H1 (cell line): ENCODE measurements at regions of chr9 and their contacts with region 1.

Region 1: DNA sequence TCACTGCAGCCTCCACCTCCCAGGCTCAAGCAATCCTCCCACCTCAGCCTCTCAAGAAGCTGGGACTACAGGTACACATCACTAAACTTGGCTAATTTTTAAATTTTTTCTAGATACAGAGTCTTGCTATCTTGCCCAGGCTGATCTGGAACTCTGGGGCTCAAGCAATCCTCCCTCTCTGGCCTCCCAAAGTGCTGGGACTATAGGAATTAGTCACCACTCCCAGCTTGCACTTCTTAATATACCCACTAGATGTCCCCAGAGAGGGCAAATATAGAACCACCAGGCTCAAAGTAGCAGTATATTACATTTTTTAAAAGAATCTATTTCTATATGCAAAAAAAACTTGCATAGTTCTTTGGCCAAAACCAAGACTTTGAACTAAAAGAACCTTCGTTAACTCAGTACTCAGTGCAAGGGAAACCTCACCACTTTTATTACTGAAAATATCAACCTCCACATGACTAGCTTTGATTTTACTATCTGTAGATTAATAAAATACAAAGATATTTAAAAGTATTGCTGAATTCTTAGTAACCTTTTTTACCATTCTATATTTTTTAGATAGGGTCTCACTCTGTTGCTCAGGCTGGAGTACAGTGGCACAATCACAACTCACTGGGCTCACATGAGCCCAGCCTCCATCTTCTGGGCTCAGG is 25.8 kb upstream of the HSD17B3 start:
- DNase-seq: no peak
- H3K4me3 ChIP-seq: no peak overlapping the region
- H3K27ac ChIP-seq: no peak overlapping the region
- H3K4me1 ChIP-seq: peaks cover 0 to 5% (median under 1%) of the 10 kb centered on the region in 4 experiments; a peak in 2 of 7 replicates
- H3K27me3 ChIP-seq: no peaks in the 10 kb centered on the region
- CTCF ChIP-seq: peak in 2 of 3 experiments; percentile 57 to 67; a peak in 3 of 4 replicates
- EP300 ChIP-seq: no peak
- POLR2A ChIP-seq: no peak
- RAD21 ChIP-seq: peak; percentile 63 to 74

Region 2: DNA sequence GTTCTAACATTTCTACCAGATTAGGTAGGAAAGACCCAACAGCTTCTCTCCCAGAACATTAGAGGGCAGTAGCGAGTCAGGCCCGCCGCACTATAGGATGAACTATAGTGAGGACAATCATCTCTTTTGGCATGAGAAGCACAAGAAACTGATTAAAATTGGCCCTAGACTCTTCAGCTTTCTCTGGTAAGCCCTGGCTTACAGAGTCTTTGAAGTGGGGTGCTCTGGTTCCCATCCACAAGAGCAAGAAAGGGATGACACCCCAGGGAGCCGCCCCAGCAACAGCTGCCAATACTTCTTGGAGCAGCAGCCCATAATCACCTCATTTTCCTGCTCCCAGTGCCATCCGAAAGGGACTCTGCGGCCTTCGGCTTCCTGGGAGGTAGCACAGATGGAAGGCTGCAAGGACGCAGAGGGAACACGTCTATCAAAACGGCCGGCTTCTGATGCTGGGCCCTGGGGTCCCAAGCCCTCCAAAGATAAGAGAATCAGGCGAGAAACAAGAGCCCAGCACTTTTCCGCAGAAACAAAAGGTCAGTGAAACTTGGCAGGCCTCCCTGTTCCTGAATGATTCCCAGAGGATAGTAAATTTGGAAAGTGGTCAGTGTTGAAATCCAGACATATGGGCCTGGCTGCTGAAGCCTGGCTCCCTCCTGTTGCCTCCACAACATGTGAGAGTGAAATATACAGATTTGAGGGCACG is 95.1 kb before region 1 on chr9:
- CTCF ChIA-PET with region 1: interaction called, 15 read pairs
- POLR2A ChIA-PET with region 1: no interaction called
- DNase-seq: no peak
- H3K4me3 ChIP-seq: no peak overlapping the region
- H3K27ac ChIP-seq: no peak overlapping the region
- H3K4me1 ChIP-seq: no peaks in the 10 kb centered on the region
- H3K27me3 ChIP-seq: no peaks in the 10 kb centered on the region
- CTCF ChIP-seq: peak; percentile 48 to 81 (median 78)
- EP300 ChIP-seq: no peak
- POLR2A ChIP-seq: no peak
- RAD21 ChIP-seq: peak; percentile 71 to 79

Region 3: DNA sequence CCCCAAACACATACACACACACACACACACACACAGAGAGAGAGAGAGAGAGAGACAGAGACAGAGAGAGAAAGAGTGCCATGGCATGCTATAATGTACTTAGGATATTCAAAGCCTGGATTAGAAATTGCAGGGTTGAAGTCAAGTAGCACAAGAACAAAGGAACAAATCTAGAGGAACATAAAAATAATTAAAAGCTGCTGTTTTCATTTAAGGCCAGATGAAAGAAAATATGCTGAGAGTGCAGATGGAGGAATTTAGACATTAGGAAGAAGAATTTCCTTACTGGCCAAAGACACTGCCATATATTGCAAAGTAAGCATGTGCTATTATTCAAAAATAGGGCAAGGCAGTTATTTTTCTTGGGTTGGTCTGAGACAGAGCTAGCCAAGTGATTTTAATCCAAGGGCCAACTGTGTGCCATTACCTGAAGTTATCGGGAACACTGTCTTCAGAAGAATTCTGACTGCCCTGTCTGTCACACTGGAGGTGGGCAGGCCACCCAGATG is 57.5 kb before region 1 on chr9:
- CTCF ChIA-PET with region 1: no interaction called
- POLR2A ChIA-PET with region 1: no interaction called
- DNase-seq: no peak
- H3K4me3 ChIP-seq: no peak overlapping the region
- H3K27ac ChIP-seq: no peak overlapping the region
- H3K4me1 ChIP-seq: peaks cover 0 to 5% (median 0%) of the 10 kb centered on the region in 4 experiments; a peak in 1 of 7 replicates
- H3K27me3 ChIP-seq: no peaks in the 10 kb centered on the region
- CTCF ChIP-seq: no peak
- EP300 ChIP-seq: no peak
- POLR2A ChIP-seq: no peak
- RAD21 ChIP-seq: no peak

Region 4: DNA sequence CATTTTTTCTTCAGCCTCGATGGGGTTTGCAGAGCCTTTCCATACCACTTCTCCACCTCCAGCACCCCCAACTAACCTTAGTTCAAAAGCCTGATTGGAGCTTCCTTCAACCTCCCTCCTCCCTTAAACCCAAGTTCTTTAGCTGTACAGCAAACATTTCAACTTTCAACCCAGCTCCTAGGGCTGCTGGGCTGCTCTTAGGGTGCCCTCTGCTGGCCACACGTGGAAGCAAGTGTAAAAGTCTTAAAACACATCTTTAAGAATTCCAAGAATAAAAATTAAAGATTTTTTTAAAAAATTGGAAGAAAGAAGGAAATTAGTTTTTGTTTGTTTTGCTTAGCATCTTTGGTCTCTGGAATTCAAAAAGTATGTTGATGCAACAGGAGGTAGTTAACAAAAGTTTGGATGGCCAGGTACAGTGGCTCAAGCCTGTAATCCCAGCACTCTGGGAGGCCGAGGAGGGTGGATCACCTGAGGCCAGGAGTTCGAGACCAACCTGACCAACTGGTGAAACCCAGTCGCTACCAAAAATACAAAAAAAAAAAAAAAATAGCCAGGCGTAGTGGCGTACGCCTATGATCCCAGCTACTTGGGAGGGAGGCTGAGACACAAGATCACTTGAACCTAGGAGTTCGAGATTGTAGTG is 10.4 kb before region 1 on chr9:
- CTCF ChIA-PET with region 1: interaction called, 32 read pairs
- POLR2A ChIA-PET with region 1: no interaction called
- DNase-seq: peak in 1 of 2 experiments; percentile 66
- H3K4me3 ChIP-seq: no peak overlapping the region
- H3K27ac ChIP-seq: no peak overlapping the region
- H3K4me1 ChIP-seq: peaks cover 0 to 10% (median 6%) of the 10 kb centered on the region in 4 experiments; a peak in 4 of 7 replicates
- H3K27me3 ChIP-seq: no peaks in the 10 kb centered on the region
- CTCF ChIP-seq: peak; percentile 58 to 90 (median 69)
- EP300 ChIP-seq: no peak
- POLR2A ChIP-seq: no peak
- RAD21 ChIP-seq: peak; percentile 93

Region 5: DNA sequence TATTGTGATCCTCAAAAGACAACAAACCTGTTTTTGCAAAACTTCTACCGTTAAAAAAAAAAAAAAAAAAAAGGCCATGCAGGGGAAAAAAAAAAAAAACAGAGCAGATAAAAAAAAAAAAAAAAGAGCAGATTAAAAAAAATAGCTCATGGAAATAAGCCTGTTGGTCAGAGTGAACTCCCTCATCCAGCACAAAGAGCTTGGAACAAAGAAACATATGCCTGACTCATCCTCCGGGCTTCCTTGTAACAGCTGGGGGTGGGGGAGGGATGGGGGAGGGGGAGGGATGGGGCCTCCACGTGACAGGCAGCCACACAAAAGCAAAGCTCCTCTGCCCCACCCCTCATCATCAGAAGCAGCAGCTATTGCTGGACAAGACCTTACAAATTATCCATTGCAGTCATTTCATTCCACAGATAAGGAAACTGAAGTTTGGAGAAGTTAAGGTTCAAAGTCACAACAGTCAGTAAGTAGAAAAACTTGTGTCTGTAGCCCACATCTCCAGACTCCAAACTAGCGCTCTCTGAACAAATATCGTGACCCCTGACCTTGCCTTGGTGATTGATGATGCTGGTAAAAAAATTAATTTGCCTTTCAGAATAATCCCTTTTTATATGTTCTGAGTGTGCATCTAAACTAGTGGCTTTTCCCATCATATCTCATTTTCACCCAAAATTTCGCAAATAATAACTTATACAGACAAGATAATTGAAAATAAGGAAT is 16.8 kb after region 1 on chr9:
- CTCF ChIA-PET with region 1: interaction called, 21 read pairs
- POLR2A ChIA-PET with region 1: interaction called, 3 read pairs
- DNase-seq: no peak
- H3K4me3 ChIP-seq: no peak overlapping the region; a peak in 1 of 8 replicates
- H3K27ac ChIP-seq: 0 out of 2 replicates have a peak overlapping the region, but pooled peaks have one; percentile 41
- H3K4me1 ChIP-seq: peaks cover 0 to 33% (median 17%) of the 10 kb centered on the region in 4 experiments; a peak in 6 of 7 replicates
- H3K27me3 ChIP-seq: no peaks in the 10 kb centered on the region
- CTCF ChIP-seq: no peak
- EP300 ChIP-seq: no peak
- POLR2A ChIP-seq: no peak
- RAD21 ChIP-seq: no peak

Region 6: GRCh38 chr9:96441798-96442445 is 114.1 kb after region 1 on chr9:
- CTCF ChIA-PET with region 1: interaction called, 10 read pairs
- POLR2A ChIA-PET with region 1: no interaction called
- DNase-seq: no peak
- H3K4me3 ChIP-seq: no peak overlapping the region
- H3K27ac ChIP-seq: no peak overlapping the region
- H3K4me1 ChIP-seq: no peaks in the 10 kb centered on the region
- H3K27me3 ChIP-seq: no peaks in the 10 kb centered on the region
- CTCF ChIP-seq: peak in 2 of 3 experiments; percentile 61 to 70; a peak in 3 of 4 replicates
- EP300 ChIP-seq: no peak
- POLR2A ChIP-seq: no peak
- RAD21 ChIP-seq: peak; percentile 70 to 76